Caco-2 (cell line): ENCODE measurements at regions of chr20 and their contacts with region 1.

Region 1: GRCh38 chr20:44692932-44693476 is 22.2 kb upstream of the CCN5 start:
- DNase-seq: peak; percentile 96 to 98
- H3K4me3 ChIP-seq: no peak overlapping the region
- H3K4me3 Mint-ChIP-seq: peak overlapping the region; percentile 64
- H3K27ac Mint-ChIP-seq: peak overlapping the region; percentile 87
- H3K4me1 ChIP-seq: peaks cover 21% of the 10 kb centered on the region
- H3K4me1 Mint-ChIP-seq: peaks cover 29% of the 10 kb centered on the region
- H3K27me3 ChIP-seq: no peaks in the 10 kb centered on the region
- H3K27me3 Mint-ChIP-seq: no peaks in the 10 kb centered on the region
- CTCF ChIP-seq: no peak

Region 2: GRCh38 chr20:44738813-44739477 is 45.9 kb after region 1 on chr20:
- CTCF ChIA-PET with region 1: interaction called, 3 read pairs
- POLR2A ChIA-PET with region 1: no interaction called
- intact Hi-C with region 1: loop called (anchors 1 kb)
- DNase-seq: peak; percentile 96 to 98
- H3K4me3 ChIP-seq: no peak overlapping the region
- H3K4me3 Mint-ChIP-seq: peak overlapping the region; percentile 56
- H3K27ac Mint-ChIP-seq: no peak overlapping the region
- H3K4me1 ChIP-seq: peaks cover 12% of the 10 kb centered on the region
- H3K4me1 Mint-ChIP-seq: peaks cover 16% of the 10 kb centered on the region
- H3K27me3 ChIP-seq: no peaks in the 10 kb centered on the region
- H3K27me3 Mint-ChIP-seq: no peaks in the 10 kb centered on the region
- CTCF ChIP-seq: no peak

Region 3: GRCh38 chr20:44785769-44786168 is 92.8 kb after region 1 on chr20:
- CTCF ChIA-PET with region 1: no interaction called
- POLR2A ChIA-PET with region 1: no interaction called
- intact Hi-C with region 1: no loop called
- DNase-seq: peak; percentile 37
- H3K4me3 ChIP-seq: no peak overlapping the region
- H3K4me3 Mint-ChIP-seq: no peak overlapping the region
- H3K27ac Mint-ChIP-seq: no peak overlapping the region
- H3K4me1 ChIP-seq: no peaks in the 10 kb centered on the region
- H3K4me1 Mint-ChIP-seq: no peaks in the 10 kb centered on the region
- H3K27me3 ChIP-seq: no peaks in the 10 kb centered on the region
- H3K27me3 Mint-ChIP-seq: peaks cover 8% of the 10 kb centered on the region
- CTCF ChIP-seq: peak; percentile 20 to 31